CD8-positive, alpha-beta memory T cell (primary cell): ENCODE measurements at regions of chrX and their contacts with region 1.

Region 1: GRCh38 chrX:15737960-15738902 is at the start of gene CA5B:
- DNase-seq: peak; percentile 92 to 100 (median 97)
- H3K4me3 ChIP-seq: peak within 1 kb of the TSS; percentile 86
- H3K4me3 Mint-ChIP-seq: peak within 1 kb of the TSS; percentile 93 to 99 (median 98)
- H3K27ac ChIP-seq: peak within 1 kb of the TSS; percentile 85
- H3K27ac Mint-ChIP-seq: peak within 1 kb of the TSS; percentile 84 to 97 (median 95)
- H3K4me1 ChIP-seq: peaks cover 23% of the 10 kb centered on the region
- H3K4me1 Mint-ChIP-seq: peaks cover 50 to 59% (median 55%) of the 10 kb centered on the region in 3 donors
- H3K27me3 ChIP-seq: no peaks in the 10 kb centered on the region
- H3K27me3 Mint-ChIP-seq: no peaks in the 10 kb centered on the region
- total RNA-seq, gene CA5B: 8.8 to 9.0 TPM

Region 2: DNA sequence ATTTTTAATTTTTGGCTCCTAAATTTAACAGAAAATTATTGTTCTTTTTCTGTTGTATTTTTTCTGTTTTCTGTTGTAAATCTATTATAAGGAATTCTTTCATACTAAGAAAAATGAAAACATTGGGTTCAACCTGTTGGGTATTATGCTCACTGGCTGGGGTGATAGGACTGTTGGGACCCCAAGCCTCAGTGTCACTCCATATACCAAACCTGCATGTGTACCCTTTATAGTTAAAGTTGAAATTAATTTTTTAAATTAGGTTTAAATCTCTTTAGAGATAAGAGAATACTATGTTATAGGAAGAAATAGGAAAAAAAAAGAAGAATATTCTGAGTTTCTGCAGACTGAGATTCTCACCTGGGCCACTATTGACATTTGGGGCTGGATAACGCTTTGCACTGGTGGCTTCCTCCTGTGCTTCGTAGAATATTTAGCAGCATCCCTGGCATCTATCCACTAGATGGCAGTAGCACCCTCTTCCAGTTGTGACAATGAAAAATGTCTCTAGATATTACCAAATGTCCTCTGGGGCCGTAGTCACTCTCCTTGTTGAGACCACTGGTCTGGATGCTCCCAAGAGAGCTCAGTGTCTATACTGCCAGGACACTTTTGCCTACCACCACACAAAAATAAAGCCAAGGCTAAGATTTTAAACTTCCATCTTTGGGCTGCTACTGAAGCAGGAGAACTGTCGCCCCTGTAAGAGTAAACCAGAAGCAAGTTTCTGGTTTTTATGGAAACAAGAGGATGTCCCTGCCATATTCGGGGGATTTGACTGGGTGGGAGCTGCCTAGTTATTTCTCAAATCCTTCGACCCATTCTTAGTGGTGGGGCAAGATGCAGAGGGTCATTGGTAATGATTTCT is 51.2 kb before region 1 on chrX:
- CTCF ChIA-PET with region 1: no interaction called
- POLR2A ChIA-PET with region 1: no interaction called
- DNase-seq: peak; percentile 29 to 70 (median 65)
- H3K4me3 ChIP-seq: no peak overlapping the region
- H3K4me3 Mint-ChIP-seq: no peak overlapping the region
- H3K27ac ChIP-seq: no peak overlapping the region
- H3K27ac Mint-ChIP-seq: peak overlapping the region in 7 of 8 donors; percentile 17 to 89 (median 79)
- H3K4me1 ChIP-seq: no peaks in the 10 kb centered on the region
- H3K4me1 Mint-ChIP-seq: peaks cover 17 to 18% (median 18%) of the 10 kb centered on the region in 3 donors
- H3K27me3 ChIP-seq: no peaks in the 10 kb centered on the region
- H3K27me3 Mint-ChIP-seq: no peaks in the 10 kb centered on the region

Region 3: DNA sequence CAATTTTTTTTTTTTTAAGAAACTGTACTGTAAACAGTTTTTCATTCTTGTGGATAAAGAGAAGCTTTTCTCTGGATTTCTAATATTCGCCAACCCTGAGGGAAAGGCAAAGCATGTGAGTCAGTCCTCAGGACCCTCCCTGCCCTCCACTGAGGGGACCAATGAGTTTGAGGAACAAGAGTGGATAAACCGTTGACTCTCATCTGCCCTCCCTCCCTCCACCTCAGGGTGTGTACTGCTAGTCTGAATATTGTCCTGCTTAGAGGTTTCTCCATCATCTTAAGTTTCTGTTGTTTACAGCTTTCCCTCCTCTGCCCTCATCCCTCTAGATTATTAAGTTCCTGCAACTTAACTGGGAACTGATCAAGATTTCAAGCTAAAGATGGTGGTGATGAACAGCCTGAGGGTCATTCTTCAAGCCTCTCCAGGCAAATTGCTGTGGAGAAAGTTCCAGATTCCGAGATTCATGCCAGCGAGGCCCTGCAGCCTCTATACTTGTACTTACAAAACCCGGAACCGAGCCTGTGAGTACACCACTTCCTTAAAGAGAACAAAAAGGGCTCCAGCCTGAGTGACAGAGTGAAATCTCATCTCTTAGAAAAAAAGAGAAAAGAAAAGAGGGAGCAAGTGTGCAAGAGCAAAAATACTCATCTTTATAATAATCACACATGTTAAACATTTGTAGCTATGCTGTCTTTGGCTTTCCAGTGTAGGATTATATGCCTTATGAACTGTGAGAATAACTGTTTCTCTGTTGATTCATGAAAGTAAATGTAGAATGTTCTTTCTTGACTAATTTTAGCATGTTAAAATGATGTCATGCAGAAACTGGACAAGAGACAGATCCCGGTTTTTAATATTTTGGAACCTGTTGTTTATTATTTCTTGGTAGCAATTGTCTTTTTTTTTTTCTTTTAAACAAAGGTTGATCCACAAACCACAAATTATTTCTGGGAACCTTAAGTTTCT is 11.7 kb after region 1 on chrX:
- CTCF ChIA-PET with region 1: interaction called, 31 read pairs
- POLR2A ChIA-PET with region 1: interaction called, 62 read pairs
- DNase-seq: peak in 3 of 5 donors; percentile 44 to 59 (median 53)
- H3K4me3 ChIP-seq: peak overlapping the region; percentile 19
- H3K4me3 Mint-ChIP-seq: peak overlapping the region; percentile 62 to 89 (median 79)
- H3K27ac ChIP-seq: peak overlapping the region; percentile 99
- H3K27ac Mint-ChIP-seq: peak overlapping the region; percentile 92 to 100 (median 97)
- H3K4me1 ChIP-seq: peaks cover 57% of the 10 kb centered on the region
- H3K4me1 Mint-ChIP-seq: peaks cover 91 to 97% (median 94%) of the 10 kb centered on the region in 3 donors
- H3K27me3 ChIP-seq: no peaks in the 10 kb centered on the region
- H3K27me3 Mint-ChIP-seq: no peaks in the 10 kb centered on the region

Region 4: GRCh38 chrX:15758140-15758539 is 19.9 kb after region 1 on chrX:
- CTCF ChIA-PET with region 1: interaction called, 25 read pairs
- POLR2A ChIA-PET with region 1: interaction called, 7 read pairs
- DNase-seq: peak in 3 of 5 donors; percentile 48 to 60 (median 49)
- H3K4me3 ChIP-seq: no peak overlapping the region
- H3K4me3 Mint-ChIP-seq: peak overlapping the region; percentile 7 to 67 (median 46)
- H3K27ac ChIP-seq: no peak overlapping the region
- H3K27ac Mint-ChIP-seq: peak overlapping the region; percentile 71 to 95 (median 86)
- H3K4me1 ChIP-seq: peaks cover 48% of the 10 kb centered on the region
- H3K4me1 Mint-ChIP-seq: peaks cover 65 to 78% (median 69%) of the 10 kb centered on the region in 3 donors
- H3K27me3 ChIP-seq: no peaks in the 10 kb centered on the region
- H3K27me3 Mint-ChIP-seq: no peaks in the 10 kb centered on the region

Region 5: DNA sequence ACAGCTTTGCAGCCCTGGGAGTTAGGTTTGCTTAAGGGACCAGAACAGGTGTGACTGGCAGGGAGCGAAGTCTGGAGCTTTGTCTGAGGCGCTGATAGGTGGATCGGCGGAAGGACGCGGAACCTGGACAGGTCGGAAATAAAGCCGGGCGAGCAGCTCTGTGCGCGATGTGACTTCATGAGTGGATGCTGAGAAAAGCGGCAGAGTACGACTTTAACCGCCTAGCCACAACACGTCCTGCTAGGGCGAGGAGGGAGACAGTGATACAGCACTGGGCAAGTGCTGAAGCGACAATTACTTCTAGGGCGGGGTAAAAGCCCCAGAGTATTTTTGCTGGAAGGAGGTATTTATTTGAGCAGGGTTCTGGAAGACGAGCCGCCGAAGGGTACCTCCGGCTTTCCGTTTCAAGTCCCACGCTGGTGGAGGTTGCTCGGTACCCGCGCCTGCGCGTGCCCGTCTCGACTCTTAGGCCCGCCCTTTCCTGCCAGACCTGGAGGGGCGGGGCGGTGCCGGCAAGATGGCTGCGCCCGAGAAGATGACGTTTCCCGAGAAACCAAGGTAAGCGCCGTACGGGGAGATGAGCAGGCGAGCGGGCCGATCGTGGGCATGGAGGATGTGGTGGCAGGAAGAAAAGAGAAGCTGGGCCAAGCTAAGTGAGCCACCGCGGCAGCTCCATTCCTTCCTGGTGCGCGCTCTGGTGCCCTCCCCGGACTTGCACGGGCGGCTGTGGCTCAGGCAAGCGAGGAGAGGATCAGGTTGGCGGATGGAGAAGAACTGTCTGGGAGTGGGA is 51.9 kb after region 1 on chrX and contains the start of gene ZRSR2:
- CTCF ChIA-PET with region 1: interaction called, 6 read pairs
- POLR2A ChIA-PET with region 1: interaction called, 11 read pairs
- DNase-seq: peak; percentile 78 to 94 (median 91)
- H3K4me3 ChIP-seq: peak within 1 kb of the TSS; percentile 76
- H3K4me3 Mint-ChIP-seq: no peak within 1 kb of the TSS
- H3K27ac ChIP-seq: peak within 1 kb of the TSS; percentile 94
- H3K27ac Mint-ChIP-seq: no peak within 1 kb of the TSS
- H3K4me1 ChIP-seq: peaks cover 10% of the 10 kb centered on the region
- H3K4me1 Mint-ChIP-seq: peaks cover 23 to 32% (median 27%) of the 10 kb centered on the region in 3 donors
- H3K27me3 ChIP-seq: no peaks in the 10 kb centered on the region
- H3K27me3 Mint-ChIP-seq: no peaks in the 10 kb centered on the region
- total RNA-seq, gene ZRSR2: 12.0 to 12.4 TPM